ENCODE measurements at regions of chr22 and their contacts with region 1.

Region 1: DNA sequence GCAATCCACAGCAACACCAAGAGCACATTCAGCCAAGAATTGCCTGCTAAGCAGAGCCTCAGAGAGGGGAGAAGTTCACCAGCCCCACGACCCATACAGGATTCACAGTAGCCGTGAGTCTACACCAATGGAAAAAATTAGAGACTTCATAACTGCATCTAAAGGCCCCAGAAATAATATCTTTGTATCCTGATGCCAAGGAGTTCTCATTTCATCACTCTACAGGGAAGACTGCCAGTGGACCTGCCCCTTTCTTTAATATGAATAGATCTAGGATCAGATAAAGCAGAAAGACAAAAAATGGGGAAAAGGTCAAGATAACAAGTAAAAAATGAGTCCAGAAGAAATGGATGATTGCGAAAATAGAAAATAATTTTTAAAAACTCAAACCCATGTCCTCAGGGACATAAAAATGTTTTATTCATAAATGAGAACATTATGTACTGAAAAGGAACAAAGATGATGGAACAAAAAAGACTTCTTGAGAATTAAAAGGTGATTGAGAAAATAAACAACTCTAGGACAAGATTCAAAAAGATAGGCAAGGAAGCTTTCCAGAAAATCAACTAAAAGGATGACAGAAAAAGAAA is 9.5 kb downstream of the APOL3 start:
- DNase-seq: no peak
- ATAC-seq: peak; percentile 37
- H3K4me3 ChIP-seq: no peak overlapping the region
- H3K27ac ChIP-seq: no peak overlapping the region
- H3K4me1 ChIP-seq: no peaks in the 10 kb centered on the region
- H3K27me3 ChIP-seq: no peaks in the 10 kb centered on the region

Region 2: GRCh38 chr22:36221799-36222751 is 71.0 kb after region 1 on chr22:
- intact Hi-C with region 1: no loop called
- DNase-seq: no peak
- ATAC-seq: no peak
- H3K4me3 ChIP-seq: no peak overlapping the region
- H3K27ac ChIP-seq: no peak overlapping the region
- H3K4me1 ChIP-seq: no peaks in the 10 kb centered on the region
- H3K27me3 ChIP-seq: no peaks in the 10 kb centered on the region

Region 3: GRCh38 chr22:36239401-36240171 is 88.5 kb after region 1 on chr22 and contains the start of gene APOL2:
- intact Hi-C with region 1: loop called in 1 of 2 experiments (anchors 5 kb)
- DNase-seq: peak; percentile 93 to 95
- ATAC-seq: peak; percentile 97
- H3K4me3 ChIP-seq: peak within 1 kb of the TSS; percentile 54 to 75
- H3K27ac ChIP-seq: peak within 1 kb of the TSS; percentile 20 to 80
- H3K4me1 ChIP-seq: no peaks in the 10 kb centered on the region
- H3K27me3 ChIP-seq: no peaks in the 10 kb centered on the region
- total RNA-seq, gene APOL2: 42.0 to 62.8 TPM